K562 (cell line): ENCODE measurements at regions of chr16 and their contacts with region 1.

Region 1: GRCh38 chr16:21001262-21001661 is 100.7 kb downstream of the LYRM1 start:
- DNase-seq: peak; percentile 31 to 62 (median 40)
- ATAC-seq: peak; percentile 87
- H3K4me3 ChIP-seq: no peak overlapping the region
- H3K27ac ChIP-seq: no peak overlapping the region
- H3K4me1 ChIP-seq: no peaks in the 10 kb centered on the region
- H3K27me3 ChIP-seq: peaks cover 10 to 26% of the 10 kb centered on the region in 2 experiments
- CTCF ChIP-seq: peak; percentile 63 to 77 (median 75)
- EP300 ChIP-seq: no peak
- POLR2A ChIP-seq: no peak
- RAD21 ChIP-seq: peak; percentile 31 to 79; a peak in 3 of 4 replicates

Region 2: GRCh38 chr16:22035153-22035552 is 1033.9 kb after region 1 on chr16:
- CTCF ChIA-PET with region 1: no interaction called
- POLR2A ChIA-PET with region 1: no interaction called
- in situ Hi-C with region 1: loop called (anchors 25 kb)
- intact Hi-C with region 1: no loop called
- DNase-seq: no peak
- ATAC-seq: no peak
- H3K4me3 ChIP-seq: no peak overlapping the region
- H3K27ac ChIP-seq: no peak overlapping the region
- H3K4me1 ChIP-seq: peaks cover 0 to 10% of the 10 kb centered on the region in 2 experiments; a peak in 3 of 5 replicates
- H3K27me3 ChIP-seq: no peaks in the 10 kb centered on the region
- CTCF ChIP-seq: no peak
- EP300 ChIP-seq: no peak
- POLR2A ChIP-seq: no peak
- RAD21 ChIP-seq: no peak